Dorsolateral prefrontal cortex (tissue), 120 donors: ENCODE measurements at regions of chr4 and their contacts with region 1.

Region 1: GRCh38 chr4:99054428-99054994 is 34.1 kb downstream of the ADH5 start:
- DNase-seq: no peak
- H3K4me3 ChIP-seq: no peak overlapping the region
- H3K27ac ChIP-seq: peak overlapping the region in 6 of 59 donors; percentile 4 to 42 (median 22)
- H3K27me3 ChIP-seq: no peaks in the 10 kb centered on the region
- CTCF ChIP-seq: no peak

Region 2: GRCh38 chr4:97645071-97645836 is 1409.3 kb before region 1 on chr4:
- intact Hi-C with region 1: no loop called
- DNase-seq: peak in 1 of 10 donors; percentile 21
- H3K4me3 ChIP-seq: no peak overlapping the region
- H3K27ac ChIP-seq: peak overlapping the region in 16 of 59 donors; percentile 0 to 53 (median 26)
- H3K27me3 ChIP-seq: no peaks in the 10 kb centered on the region
- CTCF ChIP-seq: no peak

Region 3: DNA sequence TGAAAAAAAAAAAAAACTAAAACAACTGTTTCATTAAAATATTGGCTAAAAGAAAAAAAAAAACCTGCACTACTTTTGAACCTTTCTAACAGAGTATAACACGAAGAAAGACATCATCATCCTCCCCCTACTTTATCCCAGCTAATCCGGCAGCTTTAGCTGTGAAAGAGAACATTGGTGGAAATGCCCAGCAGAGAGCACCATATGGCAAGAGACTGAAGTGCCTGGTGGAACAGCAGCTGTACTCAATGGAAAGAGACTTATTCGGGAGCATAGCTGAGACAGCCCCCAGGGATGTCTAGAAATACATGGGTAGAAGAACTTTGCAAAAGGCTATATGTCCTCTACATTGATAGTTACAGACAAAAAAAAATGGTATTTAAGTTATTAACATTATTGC is 941.5 kb before region 1 on chr4:
- intact Hi-C with region 1: loop called in 1 of 2 experiments (anchors 10 kb)
- DNase-seq: peak in 8 of 10 donors; percentile 21 to 60 (median 44)
- H3K4me3 ChIP-seq: no peak overlapping the region
- H3K27ac ChIP-seq: no peak overlapping the region
- H3K27me3 ChIP-seq: no peaks in the 10 kb centered on the region
- CTCF ChIP-seq: peak in 52 of 56 donors; percentile 9 to 66 (median 42)

Region 4: GRCh38 chr4:98143001-98143899 is 911.3 kb before region 1 on chr4 and contains the start of gene STPG2:
- intact Hi-C with region 1: loop called in 1 of 2 experiments (anchors 10 kb)
- DNase-seq: peak; percentile 77 to 96 (median 92)
- H3K4me3 ChIP-seq: peak within 1 kb of the TSS; percentile 57 to 95 (median 77)
- H3K27ac ChIP-seq: peak within 1 kb of the TSS; percentile 59 to 96 (median 90)
- H3K27me3 ChIP-seq: no peaks in the 10 kb centered on the region
- CTCF ChIP-seq: peak in 54 of 56 donors; percentile 12 to 66 (median 49)
- total RNA-seq, gene STPG2: 0.65 to 5.0 (median 2.1) TPM in 119 of 120 experiments, not detected in the other

Region 5: GRCh38 chr4:98658287-98659105 is 396.0 kb before region 1 on chr4 and contains the start of gene TSPAN5:
- intact Hi-C with region 1: loop called in 1 of 2 experiments (anchors 10 kb)
- DNase-seq: peak; percentile 56 to 90 (median 76)
- H3K4me3 ChIP-seq: peak within 1 kb of the TSS; percentile 59 to 96 (median 86)
- H3K27ac ChIP-seq: peak within 1 kb of the TSS; percentile 78 to 98 (median 94)
- H3K27me3 ChIP-seq: no peaks in the 10 kb centered on the region
- CTCF ChIP-seq: peak in 12 of 56 donors; percentile 3 to 35 (median 10)
- total RNA-seq, gene TSPAN5: 56.5 to 140 (median 109) TPM

Region 6: DNA sequence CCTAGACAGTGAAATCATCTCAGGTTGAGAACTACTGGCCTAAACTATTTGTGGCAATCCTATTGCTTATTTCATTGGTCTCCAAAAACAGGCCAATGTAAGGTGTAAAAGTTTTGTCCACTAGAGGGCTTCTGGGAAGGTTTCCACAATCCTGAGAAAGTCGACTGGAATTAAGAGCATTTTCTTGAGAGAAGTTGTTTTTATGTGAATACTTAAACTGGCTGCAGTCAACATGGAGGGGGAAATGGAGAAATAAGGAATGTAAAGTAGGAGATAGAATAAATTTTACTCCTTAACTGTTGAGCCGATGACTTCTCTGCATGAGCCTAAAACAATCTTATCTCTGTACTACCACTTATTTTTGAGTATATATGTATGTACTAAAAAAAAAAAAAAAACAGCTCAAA is 114.6 kb before region 1 on chr4:
- intact Hi-C with region 1: loop called (anchors 5 to 10 kb)
- DNase-seq: no peak
- H3K4me3 ChIP-seq: no peak overlapping the region
- H3K27ac ChIP-seq: no peak overlapping the region
- H3K27me3 ChIP-seq: no peaks in the 10 kb centered on the region
- CTCF ChIP-seq: peak; percentile 49 to 83 (median 70)

Region 7: DNA sequence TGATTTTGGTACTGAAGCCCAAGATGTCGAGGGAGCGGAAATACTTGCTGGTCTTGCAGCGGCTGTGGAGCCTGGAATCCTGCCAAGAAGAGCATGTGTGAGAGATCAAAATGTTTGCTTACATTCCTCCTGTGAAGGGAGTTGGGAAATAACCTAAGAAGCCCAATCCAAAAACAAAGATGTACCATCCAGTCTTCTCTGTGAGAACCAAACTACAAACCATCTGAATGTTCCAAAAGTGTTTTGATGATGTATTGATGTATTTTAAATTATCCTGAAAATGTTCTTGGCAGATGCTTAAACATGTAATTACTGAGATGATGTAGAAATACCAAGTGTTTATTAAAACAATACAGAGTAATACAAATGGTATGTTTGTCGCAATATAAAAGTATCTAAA is 246.4 kb after region 1 on chr4:
- intact Hi-C with region 1: no loop called
- DNase-seq: peak in 2 of 10 donors; percentile 16 to 32
- H3K4me3 ChIP-seq: no peak overlapping the region
- H3K27ac ChIP-seq: peak overlapping the region in 5 of 59 donors; percentile 15 to 75 (median 42)
- H3K27me3 ChIP-seq: no peaks in the 10 kb centered on the region
- CTCF ChIP-seq: no peak